ENCODE measurements at regions of chr18 and their contacts with region 1.

Region 1: DNA sequence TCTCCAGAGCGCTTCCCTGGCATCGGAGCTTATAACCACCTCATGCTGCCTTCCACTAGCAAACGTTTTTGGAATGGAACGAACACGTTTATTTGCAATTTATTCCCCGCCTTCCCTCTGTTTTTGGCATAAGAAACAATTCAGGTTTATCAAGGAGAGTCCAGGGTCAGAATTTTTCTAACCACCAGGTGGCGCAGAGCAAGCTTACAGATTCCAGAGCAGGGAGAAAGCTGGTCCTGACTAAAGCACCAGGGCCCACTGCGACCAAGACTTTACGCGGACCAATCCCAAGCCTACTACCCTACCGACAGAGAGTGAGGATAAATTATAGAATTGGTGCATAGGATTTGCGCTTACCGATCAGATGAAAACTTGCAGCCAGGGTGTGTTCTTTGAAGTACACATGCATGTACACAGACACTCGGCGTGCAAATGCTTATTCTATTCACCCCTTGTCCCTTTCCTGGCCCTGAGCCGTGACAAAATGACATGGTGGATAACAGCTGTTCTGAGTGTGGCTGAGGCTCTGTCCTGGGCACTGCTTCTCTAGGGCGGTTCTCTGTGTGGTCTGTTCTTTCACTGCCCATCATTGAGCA is 34.7 kb downstream of the NAPG start:
- DNase-seq: peak; percentile 72
- ATAC-seq: peak; percentile 81
- H3K4me3 ChIP-seq: no peak overlapping the region
- H3K27ac ChIP-seq: no peak overlapping the region
- H3K4me1 ChIP-seq: peaks cover 11% of the 10 kb centered on the region; the same call in 1 of the 2 replicates
- H3K27me3 ChIP-seq: no peaks in the 10 kb centered on the region
- CTCF ChIP-seq: peak; percentile 75
- POLR2A ChIP-seq: no peak
- RAD21 ChIP-seq: peak; percentile 74

Region 2: GRCh38 chr18:10660179-10660884 is 99.8 kb after region 1 on chr18:
- CTCF ChIA-PET with region 1: no interaction called
- POLR2A ChIA-PET with region 1: no interaction called
- dilution Hi-C with region 1: no loop called
- in situ Hi-C with region 1: no loop called
- intact Hi-C with region 1: loop called (anchors 10 kb)
- DNase-seq: peak; percentile 58
- ATAC-seq: peak; percentile 61
- H3K4me3 ChIP-seq: no peak overlapping the region
- H3K27ac ChIP-seq: no peak overlapping the region
- H3K4me1 ChIP-seq: no peaks in the 10 kb centered on the region
- H3K27me3 ChIP-seq: peaks cover 9% of the 10 kb centered on the region
- CTCF ChIP-seq: no peak
- POLR2A ChIP-seq: no peak
- RAD21 ChIP-seq: no peak

Region 3: DNA sequence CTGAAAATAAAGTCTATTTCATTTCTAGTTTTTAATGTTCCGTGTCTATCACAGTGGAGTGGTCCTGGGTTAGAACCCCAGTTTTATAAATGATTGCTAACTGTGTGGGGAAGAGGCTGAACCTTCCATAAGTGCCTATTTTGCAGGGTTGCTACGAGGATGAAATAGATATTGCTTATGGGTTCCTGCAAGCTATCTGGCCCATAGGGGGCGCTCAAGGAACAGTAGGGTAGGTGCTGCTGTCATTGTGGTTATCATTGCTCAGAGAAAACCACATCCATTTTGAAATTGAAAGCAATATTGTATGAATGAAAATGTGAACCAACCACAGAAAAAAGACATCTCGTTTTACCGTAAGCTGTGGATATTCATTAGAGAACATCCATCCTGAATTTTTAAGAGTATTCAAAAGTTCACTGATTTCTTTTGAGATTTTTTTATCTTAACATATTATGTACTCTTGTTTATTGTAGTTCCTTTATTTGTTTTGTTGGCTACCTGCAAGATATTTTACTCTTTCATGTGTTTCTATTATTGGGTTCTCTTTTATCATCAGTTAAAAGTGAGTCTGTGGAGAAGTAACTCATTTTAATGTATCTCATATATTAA is 226.8 kb after region 1 on chr18:
- CTCF ChIA-PET with region 1: no interaction called
- POLR2A ChIA-PET with region 1: no interaction called
- dilution Hi-C with region 1: no loop called
- in situ Hi-C with region 1: no loop called
- intact Hi-C with region 1: loop called (anchors 5 kb)
- DNase-seq: peak; percentile 80
- ATAC-seq: peak; percentile 79
- H3K4me3 ChIP-seq: no peak overlapping the region
- H3K27ac ChIP-seq: no peak overlapping the region
- H3K4me1 ChIP-seq: peaks cover 3% of the 10 kb centered on the region
- H3K27me3 ChIP-seq: no peaks in the 10 kb centered on the region
- CTCF ChIP-seq: peak; percentile 84
- POLR2A ChIP-seq: no peak
- RAD21 ChIP-seq: peak; percentile 75

Region 4: GRCh38 chr18:10851824-10852319 is 291.3 kb after region 1 on chr18:
- CTCF ChIA-PET with region 1: no interaction called
- POLR2A ChIA-PET with region 1: no interaction called
- dilution Hi-C with region 1: no loop called
- in situ Hi-C with region 1: no loop called
- intact Hi-C with region 1: loop called (anchors 5 kb)
- DNase-seq: peak; percentile 81
- ATAC-seq: peak; percentile 90
- H3K4me3 ChIP-seq: no peak overlapping the region
- H3K27ac ChIP-seq: peak overlapping the region; percentile 50; the same call in 1 of the 2 replicates
- H3K4me1 ChIP-seq: peaks cover 2% of the 10 kb centered on the region; the same call in 1 of the 2 replicates
- H3K27me3 ChIP-seq: no peaks in the 10 kb centered on the region
- CTCF ChIP-seq: peak; percentile 93
- POLR2A ChIP-seq: no peak
- RAD21 ChIP-seq: peak; percentile 93

Region 5: GRCh38 chr18:10872304-10872703 is 311.8 kb after region 1 on chr18:
- CTCF ChIA-PET with region 1: no interaction called
- POLR2A ChIA-PET with region 1: no interaction called
- dilution Hi-C with region 1: no loop called
- in situ Hi-C with region 1: no loop called
- intact Hi-C with region 1: no loop called
- DNase-seq: no peak
- ATAC-seq: no peak; the same call in 1 of the 2 replicates
- H3K4me3 ChIP-seq: no peak overlapping the region
- H3K27ac ChIP-seq: no peak overlapping the region
- H3K4me1 ChIP-seq: no peaks in the 10 kb centered on the region; the same call in 1 of the 2 replicates
- H3K27me3 ChIP-seq: no peaks in the 10 kb centered on the region
- CTCF ChIP-seq: no peak
- POLR2A ChIP-seq: no peak
- RAD21 ChIP-seq: no peak

Region 6: GRCh38 chr18:11553098-11553940 is 992.8 kb after region 1 on chr18:
- CTCF ChIA-PET with region 1: interaction called, 5 read pairs
- POLR2A ChIA-PET with region 1: interaction called, 3 read pairs
- dilution Hi-C with region 1: no loop called
- in situ Hi-C with region 1: loop called (anchors 5 kb)
- intact Hi-C with region 1: loop called (anchors 1 kb)
- DNase-seq: peak; percentile 59
- ATAC-seq: peak; percentile 99
- H3K4me3 ChIP-seq: no peak overlapping the region
- H3K27ac ChIP-seq: no peak overlapping the region
- H3K4me1 ChIP-seq: no peaks in the 10 kb centered on the region
- H3K27me3 ChIP-seq: peaks cover 9% of the 10 kb centered on the region
- CTCF ChIP-seq: peak; percentile 86
- POLR2A ChIP-seq: no peak
- RAD21 ChIP-seq: peak; percentile 89